Mammary epithelial cell (primary cell): ENCODE measurements at regions of chr3 and their contacts with region 1.

Region 1: GRCh38 chr3:113051302-113051711 is 60.5 kb downstream of the GTPBP8 start:
- DNase-seq: peak; percentile 64
- H3K4me3 ChIP-seq: no peak overlapping the region
- H3K27ac ChIP-seq: no peak overlapping the region
- H3K4me1 ChIP-seq: peaks cover 18% of the 10 kb centered on the region
- H3K27me3 ChIP-seq: no peaks in the 10 kb centered on the region
- CTCF ChIP-seq: peak; percentile 79 to 82

Region 2: GRCh38 chr3:113136071-113136470 is 84.8 kb after region 1 on chr3:
- CTCF ChIA-PET with region 1: no interaction called
- dilution Hi-C with region 1: loop called (anchors 5 kb)
- in situ Hi-C with region 1: loop called in 1 of 2 experiments (anchors 10 kb)
- intact Hi-C with region 1: loop called (anchors 1 kb)
- DNase-seq: peak; percentile 17
- H3K4me3 ChIP-seq: no peak overlapping the region
- H3K27ac ChIP-seq: no peak overlapping the region
- H3K4me1 ChIP-seq: peaks cover 8% of the 10 kb centered on the region
- H3K27me3 ChIP-seq: no peaks in the 10 kb centered on the region
- CTCF ChIP-seq: peak; percentile 47 to 61

Region 3: DNA sequence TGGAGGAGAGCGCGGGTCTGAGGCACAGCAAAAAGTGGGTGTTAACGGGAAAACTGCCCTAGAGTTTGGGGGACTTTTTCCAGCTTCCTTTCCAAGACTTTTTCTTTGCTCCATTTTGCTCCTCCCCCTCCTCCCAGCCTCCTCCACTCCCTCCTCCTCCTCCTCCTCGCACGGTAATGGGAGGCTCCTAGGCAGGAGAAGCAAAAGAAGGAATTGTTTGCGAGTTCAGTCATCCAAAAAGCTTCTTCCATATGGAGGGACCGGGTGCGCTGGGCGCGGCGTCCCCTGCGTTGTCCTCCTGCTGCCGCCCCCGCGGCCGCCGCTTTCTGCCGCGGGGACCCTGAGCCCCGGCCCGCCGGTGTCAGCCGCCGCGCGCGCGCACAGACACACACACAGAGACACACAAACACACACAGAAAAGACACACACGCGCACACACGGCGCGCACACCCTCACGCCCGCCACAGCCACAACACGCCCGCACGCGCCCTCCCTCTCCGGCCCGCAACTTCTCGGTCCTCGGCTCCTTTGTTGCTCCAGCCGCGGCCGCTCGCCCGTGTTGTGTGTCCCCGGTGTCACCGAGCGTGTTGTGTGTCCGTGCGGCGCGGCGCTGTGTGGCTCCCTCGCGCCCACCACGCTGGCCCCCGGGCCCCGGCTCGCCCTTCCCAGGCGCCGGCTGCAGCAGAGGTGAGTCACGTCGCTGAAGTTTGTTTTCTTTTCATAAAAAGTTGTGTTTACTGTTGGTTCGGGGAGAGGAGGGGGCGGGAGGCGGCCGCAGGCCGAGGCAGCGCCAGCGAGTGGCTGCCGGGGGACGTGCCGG is 160.2 kb after region 1 on chr3 and contains the start of gene BOC:
- CTCF ChIA-PET with region 1: no interaction called
- dilution Hi-C with region 1: no loop called
- in situ Hi-C with region 1: no loop called
- intact Hi-C with region 1: loop called (anchors 1 kb)
- DNase-seq: peak; percentile 57
- H3K4me3 ChIP-seq: peak within 1 kb of the TSS; percentile 79 to 92 (median 80)
- H3K27ac ChIP-seq: peak within 1 kb of the TSS; percentile 40
- H3K4me1 ChIP-seq: peaks cover 15% of the 10 kb centered on the region
- H3K27me3 ChIP-seq: no peaks in the 10 kb centered on the region
- CTCF ChIP-seq: no peak
- total RNA-seq, gene BOC: 18.5 to 49.7 TPM

Region 4: DNA sequence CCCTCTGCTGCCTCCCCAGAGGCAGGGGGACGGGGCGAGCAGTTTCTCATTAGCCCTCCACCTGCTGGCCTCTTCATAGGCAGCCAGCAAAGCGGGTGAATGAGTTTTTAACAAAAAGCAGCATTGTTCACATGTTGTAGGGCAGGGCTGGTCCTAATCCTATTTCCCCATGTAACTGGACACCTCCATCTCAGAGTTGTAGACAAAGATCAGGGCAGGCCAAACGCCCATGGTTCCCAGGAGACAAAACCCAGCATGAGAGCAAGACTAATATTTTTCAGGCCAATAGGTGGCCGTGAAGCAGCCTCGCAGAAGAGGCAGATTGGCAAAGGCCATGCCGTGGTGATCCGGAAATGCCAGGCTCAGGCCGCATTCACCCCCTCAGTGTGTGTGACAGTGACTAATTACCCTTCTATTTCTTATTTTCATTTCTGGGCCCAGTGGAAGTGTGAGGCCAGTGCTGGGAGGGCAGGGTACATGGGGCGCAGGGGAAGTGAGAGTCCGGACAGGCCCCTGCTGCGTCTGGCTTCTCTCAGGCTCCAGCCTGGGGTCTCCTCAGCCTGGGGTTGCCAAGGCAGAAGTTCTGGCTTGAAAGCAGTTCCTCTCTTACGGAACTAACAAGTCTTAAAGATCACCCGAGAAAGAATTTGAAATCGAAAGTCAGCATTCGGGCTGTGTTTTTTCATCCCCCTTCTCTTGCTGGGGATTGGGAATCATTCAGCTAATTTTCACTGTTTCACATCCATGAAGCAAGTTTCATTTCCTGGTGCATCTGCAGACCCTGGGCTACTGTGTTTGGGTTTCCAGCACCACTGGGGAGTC is 224.8 kb after region 1 on chr3:
- CTCF ChIA-PET with region 1: no interaction called
- dilution Hi-C with region 1: no loop called
- in situ Hi-C with region 1: loop called in 1 of 2 experiments (anchors 10 kb)
- intact Hi-C with region 1: loop called (anchors 2 kb)
- DNase-seq: peak; percentile 70
- H3K4me3 ChIP-seq: peak overlapping the region in 1 of 3 experiments; percentile 20
- H3K27ac ChIP-seq: peak overlapping the region; percentile 4
- H3K4me1 ChIP-seq: peaks cover 17% of the 10 kb centered on the region
- H3K27me3 ChIP-seq: no peaks in the 10 kb centered on the region
- CTCF ChIP-seq: peak; percentile 14 to 21

Region 5: GRCh38 chr3:113495035-113495434 is 443.7 kb after region 1 on chr3:
- CTCF ChIA-PET with region 1: no interaction called
- dilution Hi-C with region 1: no loop called
- in situ Hi-C with region 1: no loop called
- intact Hi-C with region 1: loop called (anchors 2 kb)
- DNase-seq: peak; percentile 27
- H3K4me3 ChIP-seq: no peak overlapping the region
- H3K27ac ChIP-seq: no peak overlapping the region
- H3K4me1 ChIP-seq: no peaks in the 10 kb centered on the region
- H3K27me3 ChIP-seq: no peaks in the 10 kb centered on the region
- CTCF ChIP-seq: peak; percentile 37 to 56

Region 6: DNA sequence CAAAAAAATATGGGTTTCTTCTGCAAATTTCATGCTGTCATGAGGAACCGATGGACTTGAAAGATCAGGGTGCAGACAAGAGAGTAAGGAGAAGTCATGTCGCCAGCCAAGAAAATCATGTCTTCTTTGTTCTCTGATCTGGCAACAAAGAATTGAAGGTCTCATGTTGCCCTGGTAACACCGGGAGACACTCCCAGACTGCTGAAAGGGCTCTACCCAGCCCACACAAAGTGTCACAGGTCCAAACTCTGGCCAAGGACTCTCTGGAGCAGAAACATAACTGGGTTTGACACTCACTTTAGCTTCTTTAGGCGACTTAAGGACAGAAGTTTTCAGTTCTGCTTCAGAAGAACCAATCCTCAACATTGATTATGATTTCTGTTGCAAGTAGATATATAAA is 523.9 kb after region 1 on chr3:
- CTCF ChIA-PET with region 1: interaction called, 5 read pairs
- dilution Hi-C with region 1: no loop called
- in situ Hi-C with region 1: no loop called
- intact Hi-C with region 1: loop called (anchors 1 kb)
- DNase-seq: no peak
- H3K4me3 ChIP-seq: no peak overlapping the region
- H3K27ac ChIP-seq: no peak overlapping the region
- H3K4me1 ChIP-seq: no peaks in the 10 kb centered on the region
- H3K27me3 ChIP-seq: peaks cover 2% of the 10 kb centered on the region
- CTCF ChIP-seq: no peak

Region 7: GRCh38 chr3:113626503-113627371 is 575.4 kb after region 1 on chr3:
- CTCF ChIA-PET with region 1: no interaction called
- dilution Hi-C with region 1: no loop called
- in situ Hi-C with region 1: no loop called
- intact Hi-C with region 1: loop called (anchors 2 kb)
- DNase-seq: peak; percentile 55
- H3K4me3 ChIP-seq: no peak overlapping the region
- H3K27ac ChIP-seq: no peak overlapping the region
- H3K4me1 ChIP-seq: no peaks in the 10 kb centered on the region
- H3K27me3 ChIP-seq: no peaks in the 10 kb centered on the region
- CTCF ChIP-seq: peak; percentile 94 to 99